ENCODE measurements at regions of chr2 and their contacts with region 1.

Region 1: DNA sequence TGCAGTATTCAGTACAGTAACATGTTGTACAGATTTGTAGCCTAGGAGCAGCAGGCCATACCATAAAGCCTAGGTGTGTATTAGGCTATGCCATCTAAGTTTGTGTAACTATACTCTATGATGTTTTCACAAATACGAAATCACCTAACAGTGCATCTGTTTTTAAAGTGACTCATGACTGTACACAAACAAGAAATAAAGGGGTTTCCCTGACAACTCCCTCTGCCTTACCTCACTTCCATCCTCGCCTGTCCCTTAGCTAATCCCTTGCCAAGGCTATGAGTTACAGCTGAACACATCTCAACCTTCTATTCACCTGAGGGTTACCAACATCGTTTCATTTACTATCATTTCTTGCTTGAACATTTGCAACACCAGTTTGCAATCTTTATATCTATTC is 78.6 kb upstream of the RPRM start:
- DNase-seq: peak; percentile 51
- ATAC-seq: no peak
- H3K4me3 ChIP-seq: no peak overlapping the region
- H3K27ac ChIP-seq: peak overlapping the region; percentile 32
- H3K4me1 ChIP-seq: peaks cover 11% of the 10 kb centered on the region
- H3K27me3 ChIP-seq: no peaks in the 10 kb centered on the region
- CTCF ChIP-seq: no peak

Region 2: DNA sequence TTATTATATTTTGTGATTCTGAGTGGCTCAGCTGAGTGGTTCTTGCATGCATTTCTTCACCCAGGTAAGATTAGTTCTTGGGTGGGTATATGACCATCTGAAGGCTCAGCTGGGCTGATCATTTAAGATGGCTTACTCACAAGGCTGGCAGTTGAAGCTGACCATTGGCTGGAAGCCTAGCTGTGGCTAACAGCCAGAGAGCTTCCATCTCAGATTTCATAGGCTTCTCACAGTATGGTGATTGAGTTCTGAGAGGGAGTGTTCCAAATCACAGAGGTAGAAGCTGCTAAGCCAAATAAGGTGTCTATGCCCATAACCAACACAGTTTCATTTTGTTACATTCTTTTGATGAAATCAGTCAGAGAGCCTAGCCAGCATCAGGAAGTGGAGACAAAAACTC is 38.7 kb after region 1 on chr2:
- CTCF ChIA-PET with region 1: no interaction called
- POLR2A ChIA-PET with region 1: no interaction called
- intact Hi-C with region 1: loop called (anchors 2 kb)
- DNase-seq: peak; percentile 92
- ATAC-seq: peak; percentile 43; the same call in 1 of the 2 replicates
- H3K4me3 ChIP-seq: peak overlapping the region; percentile 55
- H3K27ac ChIP-seq: peak overlapping the region; percentile 82
- H3K4me1 ChIP-seq: peaks cover 26% of the 10 kb centered on the region
- H3K27me3 ChIP-seq: no peaks in the 10 kb centered on the region
- CTCF ChIP-seq: no peak